Posterior vena cava (tissue), 2 donors: ENCODE measurements at regions of chr9 and their contacts with region 1.

Region 1: DNA sequence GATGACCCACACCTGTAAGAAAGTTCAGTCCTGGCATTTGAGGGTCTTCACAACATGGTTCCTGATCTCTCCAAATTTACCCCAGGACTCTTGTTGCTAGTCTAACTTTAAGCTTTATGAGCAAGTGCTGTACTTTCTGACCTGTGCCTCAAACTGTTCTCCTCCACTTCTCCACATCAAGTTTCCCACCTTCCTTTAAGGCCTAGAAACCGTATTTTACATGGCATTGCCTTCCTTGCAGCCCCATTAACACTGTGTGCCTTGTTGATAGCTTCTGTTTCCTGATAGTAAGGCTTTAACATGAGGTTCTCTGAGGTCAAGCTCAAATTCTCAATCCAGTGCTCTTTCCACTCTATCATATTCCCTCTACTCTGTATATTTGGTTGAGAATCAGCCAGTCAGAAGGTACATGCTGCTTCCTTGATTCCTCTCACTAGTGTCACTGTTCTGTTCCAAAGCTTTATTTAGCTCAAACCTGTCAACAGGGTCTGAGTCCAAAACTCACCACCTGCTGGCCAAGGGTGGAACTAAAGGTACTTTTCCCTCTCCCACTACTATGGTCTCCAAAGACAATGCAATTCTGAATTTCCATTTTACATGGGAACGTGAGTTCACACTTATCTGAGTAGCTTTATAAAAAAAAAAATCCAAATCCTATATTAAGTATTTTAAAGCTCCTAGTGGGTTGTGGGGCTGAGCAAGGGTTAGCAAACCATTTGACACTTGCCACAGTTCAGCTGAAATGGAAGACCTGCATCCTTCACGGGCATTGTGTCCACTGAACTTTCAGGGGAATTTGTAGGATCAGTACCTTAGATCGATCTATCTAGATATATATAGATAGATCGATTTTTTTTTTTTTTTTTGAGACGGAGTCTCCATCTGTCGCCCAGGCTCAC is 21.1 kb downstream of the VCP start:
- DNase-seq: no peak

Region 2: DNA sequence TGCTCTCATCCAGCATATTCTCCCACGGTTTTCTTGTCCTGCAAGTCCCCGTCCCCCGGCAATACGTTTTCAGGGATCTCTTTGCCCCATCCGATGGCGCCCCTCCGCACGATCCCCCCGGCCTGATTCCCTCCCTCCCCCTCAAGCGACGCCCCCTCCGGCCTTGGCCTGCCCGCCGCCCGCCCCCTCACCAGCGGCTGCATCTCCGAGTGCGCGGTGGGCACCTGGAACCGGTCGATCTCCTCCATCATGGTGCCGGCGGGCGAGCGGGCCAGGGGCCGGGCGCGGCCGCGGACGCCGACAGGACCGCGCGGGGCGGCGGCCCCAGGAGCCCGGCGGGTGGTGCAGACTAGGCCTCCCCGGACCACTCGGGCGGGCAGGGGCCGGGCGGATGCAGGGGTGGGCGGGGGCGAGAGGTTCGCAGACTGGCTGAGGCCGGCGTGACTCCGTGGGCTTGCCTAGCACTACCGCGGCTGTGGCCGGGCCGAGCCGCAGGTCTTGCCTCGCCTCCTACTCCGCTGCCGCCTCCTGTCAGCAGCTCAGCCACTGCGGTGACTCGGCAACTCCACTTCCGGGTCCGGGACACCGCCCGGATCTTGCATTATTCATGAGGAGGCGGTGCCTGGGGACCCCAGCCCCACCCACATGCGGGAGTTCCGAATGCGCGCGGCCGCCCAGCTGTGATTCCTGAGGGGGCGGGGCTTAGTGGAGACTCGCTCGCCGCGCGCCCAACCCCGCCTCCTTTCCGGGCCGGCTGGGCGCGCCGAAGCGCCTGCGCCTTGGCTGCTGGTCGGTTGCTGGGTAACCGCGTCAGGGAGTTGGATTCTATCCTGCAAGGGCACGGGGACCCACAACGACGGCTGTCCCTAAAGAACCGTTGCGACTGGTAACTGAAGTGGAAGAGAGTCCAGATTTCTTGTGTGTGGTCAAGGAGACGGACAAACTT is 593.0 kb before region 1 on chr9 and contains the starts of genes DNAI1 and FAM219A:
- intact Hi-C with region 1: loop called in 1 of 2 experiments (anchors 5 kb)
- DNase-seq: peak; percentile 100
- total RNA-seq, gene DNAI1: not detected
- total RNA-seq, gene FAM219A: 26.3 to 39.3 TPM

Region 3: DNA sequence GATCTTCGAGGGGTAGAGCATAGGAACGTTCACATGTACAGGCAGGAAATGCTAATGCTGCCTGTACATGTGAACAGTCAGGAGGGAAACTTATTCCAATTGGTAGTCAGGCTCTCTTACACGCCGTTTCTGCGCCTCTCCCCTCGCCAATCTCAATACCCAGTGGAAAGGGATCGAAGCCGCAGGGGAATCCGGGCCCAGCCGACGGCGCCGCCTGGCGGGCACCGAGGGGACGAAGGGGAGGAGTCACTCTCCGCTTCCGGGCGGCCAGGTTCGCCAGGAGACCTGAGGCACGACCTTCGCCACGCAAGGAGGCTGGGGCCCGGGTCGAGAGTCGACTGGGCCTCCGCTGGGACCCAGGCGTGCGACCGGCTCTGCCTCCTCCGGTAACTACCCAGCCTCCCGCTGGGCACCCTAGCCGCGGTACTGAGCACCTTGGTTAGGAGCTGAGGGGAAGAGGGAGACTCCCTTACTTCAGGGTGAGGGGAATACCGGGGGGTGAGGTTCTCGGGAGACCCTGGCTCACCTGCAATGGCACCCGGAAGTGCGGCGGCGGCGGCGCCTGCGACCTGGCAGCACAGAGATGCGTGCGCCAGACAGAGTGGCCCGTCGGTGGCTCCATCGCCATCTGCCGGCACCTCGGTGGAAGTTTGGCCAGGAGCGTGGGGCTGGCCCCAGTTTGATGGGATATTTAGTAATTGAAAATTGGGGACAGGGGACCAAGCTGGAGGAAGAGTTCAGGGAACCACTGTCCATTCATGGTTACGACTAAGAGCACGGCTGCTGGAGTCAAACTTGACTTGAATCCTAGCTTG is 44.9 kb after region 1 on chr9 and contains the start of gene PIGO:
- intact Hi-C with region 1: no loop called
- DNase-seq: peak; percentile 97
- total RNA-seq, gene PIGO: 11.8 to 15.3 TPM